Heart right ventricle (tissue), 16 donors: ENCODE measurements at regions of chr7 and their contacts with region 1.

Region 1: GRCh38 chr7:134432296-134433152 is 26.4 kb downstream of the AKR1B1 start:
- DNase-seq: peak; percentile 82 to 87
- ATAC-seq: peak; percentile 97 to 99 (median 98)
- H3K4me3 ChIP-seq: peak overlapping the region in 9 of 10 donors; percentile 20 to 59 (median 45)
- H3K27ac ChIP-seq: peak overlapping the region; percentile 11 to 87 (median 80)
- H3K4me1 ChIP-seq: peaks cover 0 to 17% (median 6%) of the 10 kb centered on the region in 9 donors
- H3K27me3 ChIP-seq: no peaks in the 10 kb centered on the region
- CTCF ChIP-seq: peak; percentile 29 to 88 (median 79)

Region 2: DNA sequence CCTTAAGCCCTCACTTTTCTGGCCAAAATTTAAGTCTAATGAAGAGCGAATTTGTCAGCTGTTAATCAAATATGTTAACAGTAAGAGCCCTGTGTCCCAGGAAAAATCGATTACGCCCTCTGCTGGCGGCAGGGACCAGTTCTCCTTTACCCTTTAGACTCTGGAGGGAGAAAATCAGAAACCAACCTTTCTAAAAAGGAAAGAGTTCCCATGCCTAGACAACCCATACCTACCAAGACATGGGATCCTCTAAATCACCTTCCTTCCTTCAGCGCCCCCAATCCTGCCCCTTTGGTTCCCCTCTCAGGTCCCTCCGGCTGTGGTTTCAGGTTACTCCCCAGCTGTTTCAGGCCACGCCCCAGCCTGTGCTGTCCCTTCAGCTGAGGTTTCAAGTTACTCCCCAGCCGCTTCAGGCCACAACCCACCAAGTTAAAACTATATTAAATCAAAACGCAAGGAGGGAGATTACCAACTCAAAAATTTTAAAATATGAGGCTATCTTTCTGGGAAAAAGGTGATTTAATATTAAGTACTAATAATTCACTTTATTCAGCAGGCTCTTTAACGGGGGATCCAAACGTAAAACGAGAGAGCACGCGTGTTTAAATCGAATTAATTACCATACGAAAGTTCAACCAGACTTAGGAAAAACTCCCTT is 115.0 kb after region 1 on chr7:
- intact Hi-C with region 1: loop called in 7 of 10 experiments (anchors 1 to 10 kb)
- DNase-seq: peak; percentile 72 to 73
- ATAC-seq: peak; percentile 90 to 96 (median 94)
- H3K4me3 ChIP-seq: peak overlapping the region in 9 of 10 donors; percentile 16 to 49 (median 42)
- H3K27ac ChIP-seq: peak overlapping the region in 4 of 10 donors; percentile 2 to 60 (median 6)
- H3K4me1 ChIP-seq: peaks cover 0 to 12% (median 0%) of the 10 kb centered on the region in 9 donors
- H3K27me3 ChIP-seq: peaks cover 0 to 9% (median 0%) of the 10 kb centered on the region in 7 donors
- CTCF ChIP-seq: peak; percentile 59 to 91 (median 87)